Activated CD4-positive, alpha-beta T cell treated with anti-CD3 and anti-CD28 coated beads for 36 hours (primary cell): ENCODE measurements at regions of chr9 and their contacts with region 1.

Region 1: GRCh38 chr9:128103589-128103962 is 24.0 kb downstream of the PTGES2 start:
- DNase-seq: peak; percentile 69
- ATAC-seq: peak; percentile 89
- H3K4me3 Mint-ChIP-seq: no peak overlapping the region
- H3K27ac Mint-ChIP-seq: peak overlapping the region; percentile 59
- H3K4me1 Mint-ChIP-seq: peaks cover 33% of the 10 kb centered on the region
- H3K27me3 Mint-ChIP-seq: no peaks in the 10 kb centered on the region

Region 2: GRCh38 chr9:128117613-128118471 is 14.3 kb after region 1 on chr9:
- CTCF ChIA-PET with region 1: interaction called, 18 read pairs
- POLR2A ChIA-PET with region 1: interaction called, 3 read pairs
- intact Hi-C with region 1: no loop called
- DNase-seq: peak; percentile 99
- ATAC-seq: peak; percentile 94
- H3K4me3 Mint-ChIP-seq: no peak overlapping the region
- H3K27ac Mint-ChIP-seq: no peak overlapping the region
- H3K4me1 Mint-ChIP-seq: peaks cover 5% of the 10 kb centered on the region
- H3K27me3 Mint-ChIP-seq: no peaks in the 10 kb centered on the region

Region 3: DNA sequence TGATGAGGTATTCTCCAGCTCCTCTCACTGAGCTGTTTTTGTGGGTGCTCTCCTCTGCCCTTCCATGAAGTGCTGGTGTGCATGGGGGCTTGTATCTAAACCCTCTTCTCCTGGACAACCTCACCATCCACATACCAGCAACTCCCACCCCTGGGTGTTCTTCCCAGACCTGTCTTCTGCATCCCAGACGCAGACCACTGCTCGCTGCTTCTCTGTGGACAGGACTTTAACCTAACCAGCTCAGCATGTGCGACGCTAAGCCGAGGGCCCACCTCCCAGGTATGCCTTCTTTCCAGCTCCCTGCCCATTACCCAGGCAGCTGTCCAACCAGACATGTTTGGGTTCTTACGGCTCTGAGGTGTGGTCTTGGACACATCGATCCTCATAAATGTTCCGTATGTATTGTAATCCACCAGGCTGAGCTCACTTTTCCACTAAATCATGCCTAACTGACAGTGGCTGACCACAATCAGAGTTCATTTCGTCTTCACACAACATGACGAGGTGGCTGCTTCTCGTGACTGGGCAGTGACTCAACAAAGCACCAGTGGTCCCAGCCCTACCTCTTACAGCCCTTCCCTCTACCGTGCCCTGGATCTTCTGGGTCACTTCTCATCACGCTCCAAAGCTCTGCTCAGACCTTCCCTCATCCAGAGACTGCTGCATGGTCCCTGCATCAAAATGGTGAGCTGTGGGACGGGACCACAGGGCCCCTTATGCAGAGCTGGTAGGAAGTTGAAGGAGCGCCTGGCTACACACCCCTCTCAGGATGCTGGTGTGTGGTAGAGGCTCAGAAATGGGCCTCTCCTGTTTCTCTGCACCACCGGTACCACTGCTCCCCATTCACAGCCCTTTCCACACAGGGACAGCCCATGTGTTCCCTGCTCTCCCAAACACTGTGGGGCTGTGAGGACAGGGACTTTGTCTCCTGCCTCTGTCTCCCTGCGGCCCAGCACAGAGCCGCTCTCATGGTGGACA is 33.5 kb after region 1 on chr9:
- CTCF ChIA-PET with region 1: no interaction called
- POLR2A ChIA-PET with region 1: no interaction called
- intact Hi-C with region 1: no loop called
- DNase-seq: no peak
- ATAC-seq: no peak
- H3K4me3 Mint-ChIP-seq: no peak overlapping the region
- H3K27ac Mint-ChIP-seq: no peak overlapping the region
- H3K4me1 Mint-ChIP-seq: peaks cover 5% of the 10 kb centered on the region
- H3K27me3 Mint-ChIP-seq: no peaks in the 10 kb centered on the region